CD4-positive, alpha-beta T cell (primary cell): ENCODE measurements at regions of chr13 and their contacts with region 1.

Region 1: DNA sequence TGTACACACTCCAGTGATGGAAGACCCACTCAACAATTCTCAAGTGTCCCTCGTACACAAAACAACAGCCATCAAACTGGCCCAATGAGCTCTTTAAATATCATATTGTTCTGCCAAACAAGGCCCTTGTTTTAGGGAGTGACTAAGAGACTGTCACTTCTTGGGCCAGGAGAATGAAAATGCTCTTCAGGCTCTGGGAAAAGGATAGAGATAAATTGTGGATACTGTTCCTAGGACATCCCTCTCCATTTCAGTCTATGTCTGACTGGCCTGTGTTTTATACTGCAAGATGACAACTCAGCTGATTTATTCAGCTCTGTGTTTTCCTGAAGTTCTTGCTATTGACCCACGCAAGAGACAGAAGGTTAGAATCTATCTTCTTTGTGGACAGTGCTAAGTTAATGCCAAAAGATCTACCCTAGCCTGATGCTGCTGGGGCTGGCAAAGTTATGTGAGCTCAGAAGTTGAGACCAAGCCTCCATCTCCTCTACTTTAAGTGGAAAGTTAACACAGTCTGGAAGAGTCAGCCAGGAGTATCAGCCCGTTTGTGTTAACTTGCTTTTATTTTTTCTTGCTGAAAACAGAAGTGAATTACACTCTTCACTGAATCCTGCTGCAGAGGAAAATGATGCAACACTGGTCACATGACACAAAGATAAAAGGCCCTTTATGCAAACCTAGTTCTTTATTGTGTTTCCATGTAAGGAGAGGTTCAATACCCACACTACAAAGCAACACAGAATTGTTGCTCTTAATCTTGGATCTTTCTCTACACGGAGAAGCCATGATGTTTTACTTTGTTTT is 14.6 kb downstream of the FRY start:
- DNase-seq: peak in 3 of 14 experiments; percentile 50 to 58 (median 55)
- ATAC-seq: peak; percentile 58
- H3K4me3 ChIP-seq: no peak overlapping the region
- H3K4me3 Mint-ChIP-seq: peak overlapping the region; percentile 61
- H3K27ac ChIP-seq: no peak overlapping the region
- H3K27ac Mint-ChIP-seq: peak overlapping the region; percentile 63
- H3K4me1 ChIP-seq: peaks cover 29% of the 10 kb centered on the region
- H3K4me1 Mint-ChIP-seq: peaks cover 58% of the 10 kb centered on the region
- H3K27me3 ChIP-seq: no peaks in the 10 kb centered on the region
- H3K27me3 Mint-ChIP-seq: no peaks in the 10 kb centered on the region
- CTCF ChIP-seq: no peak

Region 2: DNA sequence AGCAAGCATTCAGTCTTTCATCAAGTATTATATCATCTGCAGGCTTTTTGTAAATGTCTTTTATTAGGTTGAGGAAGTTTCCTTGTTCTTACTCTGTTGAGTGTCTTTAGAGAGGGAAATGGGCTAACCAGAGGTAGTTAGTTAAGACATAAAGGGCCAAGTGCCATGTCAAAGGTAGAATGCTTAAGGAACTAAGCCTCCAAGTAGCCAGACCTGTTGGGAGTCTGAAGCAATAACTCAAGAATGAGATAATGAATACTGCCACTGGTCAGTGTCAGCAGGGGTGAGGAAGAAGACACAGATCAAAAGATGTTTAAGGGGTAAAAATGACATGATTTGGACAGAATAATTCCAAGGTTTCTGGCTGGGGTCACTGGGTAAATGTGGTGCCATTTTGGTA is 106.5 kb before region 1 on chr13:
- CTCF ChIA-PET with region 1: no interaction called
- POLR2A ChIA-PET with region 1: no interaction called
- intact Hi-C with region 1: no loop called
- DNase-seq: no peak
- ATAC-seq: no peak
- H3K4me3 ChIP-seq: no peak overlapping the region
- H3K4me3 Mint-ChIP-seq: no peak overlapping the region
- H3K27ac ChIP-seq: no peak overlapping the region
- H3K27ac Mint-ChIP-seq: no peak overlapping the region
- H3K4me1 ChIP-seq: no peaks in the 10 kb centered on the region
- H3K4me1 Mint-ChIP-seq: no peaks in the 10 kb centered on the region
- H3K27me3 ChIP-seq: no peaks in the 10 kb centered on the region
- H3K27me3 Mint-ChIP-seq: no peaks in the 10 kb centered on the region
- CTCF ChIP-seq: no peak

Region 3: DNA sequence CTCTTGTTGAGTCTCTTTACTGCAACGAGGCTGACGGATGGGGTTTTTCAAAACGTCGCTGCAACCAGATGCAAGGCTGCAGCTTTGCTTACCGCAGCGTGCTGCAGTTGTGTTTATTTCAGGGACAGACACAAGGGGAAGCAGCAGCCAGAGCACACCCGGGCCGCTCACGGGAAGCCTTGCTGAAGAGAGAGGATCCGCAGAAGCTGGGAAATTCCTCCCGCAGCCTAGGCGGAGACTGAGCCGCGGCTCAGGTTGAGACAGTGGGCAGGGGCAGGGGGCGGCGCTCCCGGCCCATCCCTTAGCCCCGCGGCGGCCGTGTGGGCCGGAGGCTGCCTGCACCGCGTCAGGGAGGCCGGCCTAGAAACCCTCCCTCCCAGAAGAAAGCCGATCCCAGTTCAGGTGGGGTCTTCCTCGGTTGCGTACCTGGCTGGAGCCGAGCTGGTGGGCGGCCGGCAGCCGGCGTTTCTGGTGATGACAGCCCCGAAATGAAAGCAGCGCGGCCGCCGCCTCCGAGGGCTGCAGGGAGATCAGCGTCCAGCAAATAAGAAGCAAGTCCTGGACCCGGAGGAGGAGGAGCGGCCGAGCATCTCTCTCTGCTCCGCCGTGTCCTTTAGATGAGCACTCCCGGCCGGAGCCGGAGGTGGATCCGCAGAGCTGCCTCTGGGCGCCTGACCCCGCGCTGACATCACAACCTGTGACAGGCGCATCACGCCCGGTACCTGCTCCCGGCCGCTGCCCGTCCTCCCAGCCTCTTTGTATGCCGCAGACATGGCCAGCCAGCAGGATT is 15.0 kb before region 1 on chr13 and contains the start of gene FRY:
- CTCF ChIA-PET with region 1: interaction called, 9 read pairs
- POLR2A ChIA-PET with region 1: interaction called, 23 read pairs
- intact Hi-C with region 1: no loop called
- DNase-seq: peak; percentile 12 to 84 (median 36)
- ATAC-seq: peak; percentile 80
- H3K4me3 ChIP-seq: peak within 1 kb of the TSS; percentile 85
- H3K4me3 Mint-ChIP-seq: peak within 1 kb of the TSS; percentile 91
- H3K27ac ChIP-seq: peak within 1 kb of the TSS in 1 of 2 donors; percentile 57
- H3K27ac Mint-ChIP-seq: peak within 1 kb of the TSS; percentile 75
- H3K4me1 ChIP-seq: peaks cover 6% of the 10 kb centered on the region
- H3K4me1 Mint-ChIP-seq: peaks cover 60% of the 10 kb centered on the region
- H3K27me3 ChIP-seq: no peaks in the 10 kb centered on the region
- H3K27me3 Mint-ChIP-seq: no peaks in the 10 kb centered on the region
- CTCF ChIP-seq: peak; percentile 8
- total RNA-seq, gene FRY: 13.7 to 18.4 TPM

Region 4: GRCh38 chr13:32117701-32118100 is 71.5 kb after region 1 on chr13:
- CTCF ChIA-PET with region 1: no interaction called
- POLR2A ChIA-PET with region 1: no interaction called
- intact Hi-C with region 1: loop called in 1 of 2 experiments (anchors 5 kb)
- DNase-seq: peak in 1 of 14 experiments; percentile 19
- ATAC-seq: no peak
- H3K4me3 ChIP-seq: no peak overlapping the region
- H3K4me3 Mint-ChIP-seq: no peak overlapping the region
- H3K27ac ChIP-seq: no peak overlapping the region
- H3K27ac Mint-ChIP-seq: no peak overlapping the region
- H3K4me1 ChIP-seq: no peaks in the 10 kb centered on the region
- H3K4me1 Mint-ChIP-seq: peaks cover 27% of the 10 kb centered on the region
- H3K27me3 ChIP-seq: no peaks in the 10 kb centered on the region
- H3K27me3 Mint-ChIP-seq: no peaks in the 10 kb centered on the region
- CTCF ChIP-seq: no peak

Region 5: GRCh38 chr13:32538621-32539246 is 492.6 kb after region 1 on chr13 and contains the start of gene N4BP2L2:
- CTCF ChIA-PET with region 1: no interaction called
- POLR2A ChIA-PET with region 1: no interaction called
- intact Hi-C with region 1: no loop called
- DNase-seq: peak; percentile 82 to 97 (median 88)
- ATAC-seq: peak; percentile 96
- H3K4me3 ChIP-seq: peak within 1 kb of the TSS; percentile 81
- H3K4me3 Mint-ChIP-seq: peak within 1 kb of the TSS; percentile 100
- H3K27ac ChIP-seq: peak within 1 kb of the TSS; percentile 98
- H3K27ac Mint-ChIP-seq: peak within 1 kb of the TSS; percentile 100
- H3K4me1 ChIP-seq: peaks cover 18% of the 10 kb centered on the region
- H3K4me1 Mint-ChIP-seq: peaks cover 55% of the 10 kb centered on the region
- H3K27me3 ChIP-seq: no peaks in the 10 kb centered on the region
- H3K27me3 Mint-ChIP-seq: peaks cover 5% of the 10 kb centered on the region
- CTCF ChIP-seq: peak; percentile 33
- total RNA-seq, gene N4BP2L2: 171 TPM